ENCODE measurements at regions of chr14 and their contacts with region 1.

Region 1: DNA sequence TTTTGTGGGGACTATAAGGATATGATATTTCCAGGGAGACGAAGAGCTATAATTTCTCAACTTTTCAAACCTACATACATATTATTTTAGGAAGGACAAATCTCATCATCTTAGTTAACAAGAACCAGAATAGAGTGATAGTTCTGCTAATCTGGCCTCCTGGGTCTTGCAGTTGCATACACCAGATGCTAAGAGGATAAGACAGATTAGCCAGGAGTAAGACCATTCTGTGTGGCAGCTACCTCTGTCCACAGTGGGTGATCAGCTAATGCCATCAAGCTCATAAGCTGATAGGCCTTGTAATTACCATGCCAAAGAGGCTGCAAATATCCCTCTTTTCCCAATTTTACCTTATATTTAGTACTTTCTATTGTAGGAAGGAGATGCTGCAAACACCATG is 776.8 kb downstream of the NRXN3 start:
- DNase-seq: no peak
- H3K4me3 ChIP-seq: no peak overlapping the region
- H3K27ac ChIP-seq: no peak overlapping the region
- H3K4me1 ChIP-seq: no peaks in the 10 kb centered on the region
- H3K27me3 ChIP-seq: peaks cover 0 to 32% (median 4%) of the 10 kb centered on the region in 5 experiments

Region 2: DNA sequence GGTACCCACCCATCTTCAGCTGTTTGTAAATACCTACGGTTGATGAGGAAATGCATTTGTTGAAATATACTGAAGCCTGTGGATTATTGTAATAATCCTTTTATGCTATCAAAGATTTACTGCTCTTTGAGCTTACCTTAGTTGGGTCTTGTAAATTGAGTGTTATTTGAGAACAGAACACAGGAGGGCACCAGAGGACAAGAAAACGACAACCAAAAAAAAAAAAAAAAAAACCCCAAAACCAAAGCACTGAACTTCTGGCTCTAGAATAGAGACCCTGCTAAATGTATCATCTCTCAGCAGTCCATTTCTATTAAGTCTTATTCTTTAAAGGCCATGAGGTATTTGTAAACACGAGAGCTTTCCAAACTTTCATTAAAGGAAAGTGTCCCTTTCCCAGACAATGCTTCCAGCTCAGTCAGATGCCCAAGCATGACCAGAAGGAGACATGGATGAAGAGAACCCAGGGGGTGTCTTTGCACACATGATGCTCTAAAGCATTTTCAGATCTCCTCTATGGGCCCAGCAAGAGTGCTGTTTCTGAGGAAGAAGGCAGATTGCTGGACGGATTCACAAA is 12.9 kb before region 1 on chr14:
- CTCF ChIA-PET with region 1: interaction called, 10 read pairs
- POLR2A ChIA-PET with region 1: no interaction called
- DNase-seq: peak; percentile 41 to 76 (median 70)
- H3K4me3 ChIP-seq: no peak overlapping the region
- H3K27ac ChIP-seq: no peak overlapping the region
- H3K4me1 ChIP-seq: peaks cover 0 to 10% (median 0%) of the 10 kb centered on the region in 4 experiments
- H3K27me3 ChIP-seq: no peaks in the 10 kb centered on the region

Measured in common myeloid progenitor, CD34-positive (primary cell).